ENCODE measurements at regions of chr12 and their contacts with region 1.

Region 1: DNA sequence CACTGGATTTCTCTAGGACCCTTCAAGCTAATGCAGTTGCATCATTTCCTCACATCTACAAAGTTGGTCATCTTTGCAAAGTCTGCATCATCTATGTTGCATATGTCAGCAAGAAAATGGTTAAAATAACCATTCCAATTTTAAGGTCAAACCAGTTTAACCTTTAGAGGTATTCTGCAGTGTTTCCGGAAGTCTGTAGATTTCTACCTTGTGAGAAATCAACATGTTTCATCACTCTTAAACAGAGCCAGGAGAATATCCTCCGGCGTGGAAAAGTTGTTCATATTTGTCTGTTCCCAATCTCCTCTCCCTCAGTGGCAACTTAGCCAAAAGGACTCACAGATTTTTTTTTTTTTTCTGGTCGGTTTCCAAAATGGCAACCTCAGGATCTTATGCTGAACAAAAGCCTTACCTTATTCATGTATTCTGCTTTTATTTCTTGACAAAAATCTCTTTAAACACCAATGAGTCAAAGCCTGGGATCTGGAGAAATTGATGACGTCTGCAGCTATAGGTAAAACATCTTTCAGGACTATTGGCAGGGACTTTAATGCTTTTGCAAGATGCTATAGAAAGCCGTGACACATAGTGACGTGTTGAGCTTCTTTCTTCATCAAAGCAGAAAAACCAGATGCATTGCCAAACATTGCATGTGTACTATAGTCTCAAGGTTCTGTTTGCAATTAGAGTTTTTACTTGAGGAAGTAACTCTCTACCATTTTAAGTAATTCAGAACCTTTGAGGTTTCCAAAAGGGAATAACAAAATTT is 16.0 kb upstream of the CDK17 start:
- DNase-seq: no peak
- H3K4me3 Mint-ChIP-seq: no peak overlapping the region
- H3K27ac Mint-ChIP-seq: no peak overlapping the region
- H3K4me1 Mint-ChIP-seq: peaks cover 44% of the 10 kb centered on the region
- H3K27me3 Mint-ChIP-seq: peaks cover 3% of the 10 kb centered on the region

Region 2: GRCh38 chr12:96427269-96427729 is 11.1 kb after region 1 on chr12:
- intact Hi-C with region 1: loop called (anchors 1 kb)
- DNase-seq: no peak
- H3K4me3 Mint-ChIP-seq: peak overlapping the region; percentile 1
- H3K27ac Mint-ChIP-seq: peak overlapping the region; percentile 53
- H3K4me1 Mint-ChIP-seq: peaks cover 52% of the 10 kb centered on the region
- H3K27me3 Mint-ChIP-seq: peaks cover 5% of the 10 kb centered on the region

Region 3: GRCh38 chr12:96434107-96434506 is 17.9 kb after region 1 on chr12:
- intact Hi-C with region 1: loop called (anchors 1 kb)
- DNase-seq: peak; percentile 75
- H3K4me3 Mint-ChIP-seq: peak overlapping the region; percentile 9
- H3K27ac Mint-ChIP-seq: peak overlapping the region; percentile 32
- H3K4me1 Mint-ChIP-seq: peaks cover 32% of the 10 kb centered on the region
- H3K27me3 Mint-ChIP-seq: peaks cover 6% of the 10 kb centered on the region

Region 4: DNA sequence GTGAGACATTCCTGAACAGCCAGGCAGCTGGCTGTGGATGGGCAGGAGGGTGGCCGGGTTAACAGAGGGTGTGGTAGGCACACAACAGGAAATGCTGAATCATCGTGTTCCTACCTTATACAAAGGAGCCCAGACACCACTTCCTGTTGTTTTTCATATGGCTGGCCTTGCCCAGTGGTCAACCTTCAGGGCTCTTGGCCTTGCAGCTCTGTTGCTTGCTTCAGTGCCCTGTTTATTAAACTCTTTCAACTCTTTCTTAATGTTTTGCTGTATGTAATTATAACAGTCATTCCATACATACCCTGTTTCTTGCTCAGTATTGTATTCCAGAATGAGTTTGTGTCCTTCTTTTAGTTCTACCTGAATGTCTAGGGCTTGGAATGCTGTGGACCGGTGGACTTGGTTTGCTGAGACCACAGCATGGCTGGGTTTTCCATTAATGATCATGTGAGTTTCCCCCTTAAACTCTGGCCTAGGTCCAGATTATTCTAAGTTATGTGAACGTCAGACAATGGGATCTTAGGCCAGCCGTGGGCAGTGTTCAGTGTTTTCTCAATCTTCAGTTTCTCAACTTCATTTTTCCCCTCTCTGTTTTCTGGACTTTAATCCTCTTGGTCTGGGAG is 85.0 kb after region 1 on chr12:
- intact Hi-C with region 1: no loop called
- DNase-seq: peak; percentile 33
- H3K4me3 Mint-ChIP-seq: peak overlapping the region; percentile 61
- H3K27ac Mint-ChIP-seq: peak overlapping the region; percentile 83
- H3K4me1 Mint-ChIP-seq: peaks cover 59% of the 10 kb centered on the region
- H3K27me3 Mint-ChIP-seq: peaks cover 4% of the 10 kb centered on the region

Measured in activated T-helper 1 cell treated with anti-CD3 and anti-CD28 coated beads, Interleukin-12 subunit alpha, Interleukin-12 subunit beta, Interleukin-2, Interleukin-4 antibody, amounts not matched to agents 30 ng/mL and 10 ng/mL and 1 ng/mL, durations not matched to agents 14 hours and 24 hours and 36 hours (primary cell).